ENCODE measurements at regions of chr1 and their contacts with region 1.

Region 1: DNA sequence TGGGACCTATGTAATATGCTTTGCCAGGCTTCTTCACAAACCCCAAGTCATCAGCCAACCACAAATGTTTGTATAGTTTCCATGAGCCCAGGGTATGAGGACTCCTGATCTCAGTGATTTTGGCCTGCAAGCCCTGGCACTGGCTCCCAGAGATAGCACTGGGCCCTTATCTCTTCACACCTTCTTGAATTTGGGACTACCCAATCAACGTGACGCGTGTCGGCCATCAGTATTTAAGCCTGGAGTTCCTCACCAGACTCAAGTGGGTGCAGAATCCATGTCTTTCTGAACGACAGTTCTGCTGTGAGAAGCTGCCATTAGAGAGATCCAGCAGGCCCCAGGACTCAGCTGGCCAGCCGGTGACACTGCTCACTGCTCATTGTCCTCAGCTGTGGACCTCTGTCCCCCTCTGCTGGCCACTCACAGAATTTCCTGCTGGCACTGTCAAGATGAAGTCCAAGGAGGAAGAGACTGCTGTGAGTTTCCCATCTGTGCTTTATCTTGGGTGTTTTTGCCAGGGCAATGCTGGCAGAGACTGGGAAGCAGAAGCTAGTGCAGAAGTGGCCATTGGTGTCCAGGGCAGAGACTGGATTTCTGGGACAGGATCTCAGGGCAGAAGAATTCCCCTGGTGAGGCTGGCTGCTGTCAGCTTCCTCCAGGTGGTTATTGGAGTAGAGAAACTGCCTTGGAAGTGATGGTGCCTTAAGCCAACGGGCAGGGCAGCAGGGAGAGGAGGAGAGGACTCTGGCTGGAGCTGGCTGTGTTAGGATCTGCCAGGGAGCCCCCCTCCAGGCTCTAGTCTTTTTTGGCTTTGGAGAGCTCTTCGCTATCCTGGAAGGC is 28.4 kb downstream of the TMCC2 start:
- DNase-seq: peak; percentile 69
- ATAC-seq: peak; percentile 92
- H3K4me3 ChIP-seq: no peak overlapping the region
- H3K27ac ChIP-seq: no peak overlapping the region
- H3K4me1 ChIP-seq: peaks cover 17 to 36% of the 10 kb centered on the region in 2 experiments
- H3K27me3 ChIP-seq: no peaks in the 10 kb centered on the region
- CTCF ChIP-seq: peak; percentile 88 to 96 (median 95)
- POLR2A ChIP-seq: no peak
- RAD21 ChIP-seq: peak; percentile 99

Region 2: GRCh38 chr1:204975570-204976235 is 280.5 kb before region 1 on chr1:
- CTCF ChIA-PET with region 1: interaction called, 30 read pairs
- POLR2A ChIA-PET with region 1: no interaction called
- RAD21 ChIA-PET with region 1: interaction called, 3 read pairs
- intact Hi-C with region 1: loop called (anchors 1 kb)
- DNase-seq: peak; percentile 27
- ATAC-seq: peak; percentile 93
- H3K4me3 ChIP-seq: no peak overlapping the region
- H3K27ac ChIP-seq: no peak overlapping the region
- H3K4me1 ChIP-seq: peaks cover 3 to 11% of the 10 kb centered on the region in 2 experiments; a peak in 3 of 4 replicates
- H3K27me3 ChIP-seq: peaks cover 14% of the 10 kb centered on the region; the same call in 1 of the 2 replicates
- CTCF ChIP-seq: peak; percentile 77 to 91 (median 85)
- POLR2A ChIP-seq: no peak
- RAD21 ChIP-seq: peak; percentile 82

Region 3: DNA sequence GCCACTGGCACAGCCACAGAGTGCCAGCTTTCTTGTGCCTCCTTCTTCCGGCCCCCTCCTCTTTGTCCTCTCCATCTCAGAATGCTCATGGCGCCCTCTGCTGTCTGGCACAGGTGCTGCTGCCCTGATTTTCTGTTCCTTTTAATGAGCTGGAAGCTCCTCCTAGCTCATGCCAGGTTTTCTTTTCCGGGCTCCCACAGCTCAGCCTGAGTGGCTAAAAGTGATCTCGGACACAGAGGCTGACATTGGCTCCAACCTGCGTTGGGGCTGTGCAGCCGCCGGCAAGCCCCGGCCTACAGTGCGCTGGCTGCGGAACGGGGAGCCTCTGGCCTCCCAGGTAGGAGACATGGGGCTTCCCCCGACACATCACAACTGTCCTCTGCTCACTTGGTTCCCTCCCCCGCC is 194.5 kb before region 1 on chr1:
- CTCF ChIA-PET with region 1: interaction called, 36 read pairs
- POLR2A ChIA-PET with region 1: no interaction called
- RAD21 ChIA-PET with region 1: interaction called, 6 to 7 read pairs
- intact Hi-C with region 1: loop called (anchors 1 kb)
- DNase-seq: peak; percentile 35
- ATAC-seq: peak; percentile 83
- H3K4me3 ChIP-seq: no peak overlapping the region
- H3K27ac ChIP-seq: no peak overlapping the region
- H3K4me1 ChIP-seq: no peaks in the 10 kb centered on the region; a peak in 1 of 4 replicates
- H3K27me3 ChIP-seq: no peaks in the 10 kb centered on the region
- CTCF ChIP-seq: peak; percentile 90 to 92 (median 92)
- POLR2A ChIP-seq: no peak
- RAD21 ChIP-seq: peak; percentile 89

Region 4: GRCh38 chr1:205141236-205142101 is 114.7 kb before region 1 on chr1:
- CTCF ChIA-PET with region 1: interaction called, 5 read pairs
- POLR2A ChIA-PET with region 1: no interaction called
- RAD21 ChIA-PET with region 1: interaction called in 1 of 2 experiments, 3 read pairs
- intact Hi-C with region 1: loop called (anchors 1 kb)
- DNase-seq: peak; percentile 71
- ATAC-seq: peak; percentile 93
- H3K4me3 ChIP-seq: no peak overlapping the region
- H3K27ac ChIP-seq: no peak overlapping the region
- H3K4me1 ChIP-seq: peaks cover 2 to 7% of the 10 kb centered on the region in 2 experiments; a peak in 3 of 4 replicates
- H3K27me3 ChIP-seq: no peaks in the 10 kb centered on the region
- CTCF ChIP-seq: peak; percentile 47 to 88 (median 80); a peak in 5 of 6 replicates
- POLR2A ChIP-seq: no peak
- RAD21 ChIP-seq: peak; percentile 59

Region 5: GRCh38 chr1:205227584-205228006 is 28.6 kb before region 1 on chr1 and contains the start of gene TMCC2:
- CTCF ChIA-PET with region 1: interaction called, 66 read pairs
- POLR2A ChIA-PET with region 1: interaction called, 4 read pairs
- RAD21 ChIA-PET with region 1: interaction called, 16 to 20 read pairs
- intact Hi-C with region 1: loop called (anchors 1 kb)
- DNase-seq: peak; percentile 74
- ATAC-seq: peak; percentile 90
- H3K4me3 ChIP-seq: peak within 1 kb of the TSS; percentile 54 to 67
- H3K27ac ChIP-seq: no peak within 1 kb of the TSS; the same call in 1 of the 2 replicates
- H3K4me1 ChIP-seq: peaks cover 11 to 28% of the 10 kb centered on the region in 2 experiments; a peak in 3 of 4 replicates
- H3K27me3 ChIP-seq: no peaks in the 10 kb centered on the region
- CTCF ChIP-seq: no peak
- POLR2A ChIP-seq: peak; percentile 34
- RAD21 ChIP-seq: no peak
- total RNA-seq, gene TMCC2: 2.7 TPM

Region 6: GRCh38 chr1:205301842-205302588 is 45.9 kb after region 1 on chr1:
- CTCF ChIA-PET with region 1: no interaction called
- POLR2A ChIA-PET with region 1: no interaction called
- RAD21 ChIA-PET with region 1: no interaction called
- intact Hi-C with region 1: no loop called
- DNase-seq: no peak
- ATAC-seq: no peak
- H3K4me3 ChIP-seq: peak overlapping the region in 1 of 2 experiments; percentile 48; a peak in 2 of 4 replicates
- H3K27ac ChIP-seq: peak overlapping the region; percentile 74
- H3K4me1 ChIP-seq: peaks cover 48 to 63% of the 10 kb centered on the region in 2 experiments
- H3K27me3 ChIP-seq: no peaks in the 10 kb centered on the region
- CTCF ChIP-seq: no peak
- POLR2A ChIP-seq: no peak
- RAD21 ChIP-seq: no peak

Measured in HCT116 (cell line).